ENCODE measurements at regions of chr12 and their contacts with region 1.

Region 1: DNA sequence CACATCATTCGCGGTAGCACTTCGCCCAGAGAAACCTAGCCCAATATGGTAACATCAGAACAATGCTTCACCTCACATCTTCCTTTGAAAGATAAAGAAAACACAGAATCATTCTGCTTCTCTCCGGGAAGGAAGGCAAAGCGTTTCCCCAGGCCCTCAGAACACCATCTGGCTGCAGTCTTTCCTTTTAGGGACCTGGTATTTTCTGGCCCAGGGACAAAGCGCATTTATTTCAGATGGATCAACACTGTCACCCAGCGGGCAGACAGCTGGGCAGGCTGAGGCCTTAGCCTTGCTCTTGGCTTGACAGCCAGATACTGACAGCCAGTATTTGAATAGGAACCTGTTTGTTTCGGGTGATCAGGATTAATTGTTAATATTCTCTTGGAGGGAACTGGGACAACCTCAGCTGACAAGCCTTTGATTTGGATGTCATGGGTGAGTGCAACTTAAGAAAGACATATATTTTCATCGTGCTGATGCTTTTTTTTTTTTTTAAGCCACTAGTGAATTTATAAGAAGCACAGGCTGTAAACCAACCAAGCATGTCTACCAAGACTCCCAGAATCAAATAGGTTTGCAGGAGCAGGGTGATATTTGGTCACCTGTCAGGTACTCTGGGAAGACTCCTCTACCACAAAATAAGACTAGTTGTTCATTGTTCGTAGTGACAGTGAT is 118.9 kb downstream of the VEZT start:
- DNase-seq: peak; percentile 57 to 86
- H3K4me3 ChIP-seq: peak overlapping the region in 1 of 2 donors; percentile 19
- H3K27ac ChIP-seq: peak overlapping the region; percentile 41 to 58
- H3K4me1 ChIP-seq: peaks cover 0 to 8% (median 0%) of the 10 kb centered on the region in 4 donors
- H3K27me3 ChIP-seq: no peaks in the 10 kb centered on the region
- CTCF ChIP-seq: peak; percentile 88 to 93

Region 2: DNA sequence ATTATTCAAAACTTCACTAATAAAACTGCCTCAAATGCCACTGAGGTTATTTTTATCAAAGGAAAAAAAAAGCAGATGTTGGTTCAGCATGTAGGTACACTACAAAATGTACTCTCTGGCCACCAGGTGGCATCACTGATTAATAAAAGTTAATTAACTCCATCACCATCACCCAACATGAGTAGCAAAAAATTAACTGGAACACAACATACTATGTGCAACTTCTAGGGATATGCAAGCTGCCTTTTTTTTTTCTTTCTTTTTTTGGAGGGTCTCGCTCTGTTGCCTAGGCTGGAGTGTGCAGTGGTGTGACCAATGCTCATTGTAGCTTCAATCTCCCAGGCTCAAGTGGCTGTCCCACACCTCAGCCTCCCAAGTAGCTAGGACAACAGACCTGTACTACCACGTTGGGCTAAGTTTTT is 219.3 kb before region 1 on chr12:
- intact Hi-C with region 1: loop called (anchors 2 kb)
- DNase-seq: peak; percentile 67
- H3K4me3 ChIP-seq: no peak overlapping the region
- H3K27ac ChIP-seq: peak overlapping the region; percentile 51 to 57
- H3K4me1 ChIP-seq: peaks cover 0 to 31% (median 22%) of the 10 kb centered on the region in 4 donors
- H3K27me3 ChIP-seq: no peaks in the 10 kb centered on the region
- CTCF ChIP-seq: peak; percentile 61 to 88

Region 3: GRCh38 chr12:95217377-95218149 is 119.0 kb before region 1 on chr12 and contains the starts of genes FGD6 and VEZT:
- intact Hi-C with region 1: loop called (anchors 10 kb)
- DNase-seq: peak; percentile 99 to 100
- H3K4me3 ChIP-seq: peak within 1 kb of the TSS; percentile 70 to 97
- H3K27ac ChIP-seq: peak within 1 kb of the TSS; percentile 94 to 100
- H3K4me1 ChIP-seq: peaks cover 0 to 40% (median 6%) of the 10 kb centered on the region in 4 donors
- H3K27me3 ChIP-seq: no peaks in the 10 kb centered on the region
- CTCF ChIP-seq: peak; percentile 49 to 56

Region 4: GRCh38 chr12:95532851-95533250 is 196.3 kb after region 1 on chr12:
- intact Hi-C with region 1: loop called (anchors 10 kb)
- DNase-seq: no peak
- H3K4me3 ChIP-seq: no peak overlapping the region
- H3K27ac ChIP-seq: no peak overlapping the region
- H3K4me1 ChIP-seq: no peaks in the 10 kb centered on the region
- H3K27me3 ChIP-seq: no peaks in the 10 kb centered on the region
- CTCF ChIP-seq: no peak

Region 5: GRCh38 chr12:95633049-95633545 is 296.6 kb after region 1 on chr12:
- intact Hi-C with region 1: no loop called
- DNase-seq: peak; percentile 55 to 81
- H3K4me3 ChIP-seq: no peak overlapping the region
- H3K27ac ChIP-seq: peak overlapping the region; percentile 26 to 40
- H3K4me1 ChIP-seq: peaks cover 0 to 25% (median 4%) of the 10 kb centered on the region in 4 donors
- H3K27me3 ChIP-seq: no peaks in the 10 kb centered on the region
- CTCF ChIP-seq: no peak